ENCODE measurements at regions of chr11 and their contacts with region 1.

Region 1: DNA sequence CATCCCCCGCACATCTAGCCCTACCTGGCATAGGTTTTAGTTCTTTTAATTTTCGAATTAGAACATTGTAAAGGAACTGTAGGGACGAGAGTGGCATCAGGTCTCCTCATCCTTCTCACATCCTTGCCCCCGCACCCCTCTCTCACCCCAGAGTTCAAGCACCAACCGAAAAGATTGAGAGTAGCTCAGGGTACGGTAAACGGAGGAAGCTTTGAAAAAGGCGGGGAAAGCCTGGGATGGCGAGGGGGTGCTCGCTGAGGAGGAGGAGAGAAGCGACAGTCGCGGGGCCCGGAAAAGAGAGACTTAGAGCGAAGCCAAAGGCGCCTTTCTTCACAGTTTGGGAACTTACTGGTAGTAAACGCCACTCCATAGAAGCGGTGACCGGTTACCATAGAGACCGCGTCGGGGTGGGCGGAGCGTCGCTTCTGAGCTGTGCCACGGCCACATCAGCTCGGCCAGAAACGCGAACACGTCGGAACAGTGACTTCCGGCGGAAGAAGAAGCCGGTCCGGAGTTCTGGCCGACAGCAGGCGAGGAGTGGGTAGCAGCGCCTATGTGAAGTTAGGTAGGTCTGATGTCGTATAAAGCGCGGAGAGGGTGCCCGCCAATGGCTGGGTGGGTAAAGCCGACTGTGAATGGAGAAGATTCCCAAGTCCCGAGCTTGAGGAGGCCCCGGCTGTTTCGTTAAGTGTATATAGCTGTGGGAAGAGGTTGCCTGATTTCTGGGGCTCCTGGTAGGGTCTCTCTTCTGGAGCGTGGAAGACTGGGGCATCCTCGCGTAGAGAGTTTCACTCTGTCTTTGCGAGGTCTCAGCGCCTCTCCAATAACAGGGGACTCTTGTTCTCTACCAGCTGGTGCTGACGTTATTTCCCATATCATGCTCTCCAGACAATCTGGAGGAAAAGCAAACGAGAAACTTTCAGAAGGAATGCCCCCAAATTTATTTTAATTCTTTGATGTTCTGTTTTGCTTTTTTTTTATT is at the starts of genes DCDC1 and DNAJC24:
- DNase-seq: peak; percentile 88
- H3K4me3 Mint-ChIP-seq: peak within 1 kb of the TSS; percentile 98
- H3K27ac Mint-ChIP-seq: peak within 1 kb of the TSS; percentile 94
- H3K4me1 Mint-ChIP-seq: peaks cover 31% of the 10 kb centered on the region
- H3K27me3 Mint-ChIP-seq: peaks cover 19% of the 10 kb centered on the region
- total RNA-seq, gene DCDC1: not detected in 2 replicates
- total RNA-seq, gene DNAJC24: 19.6 and 20.7 TPM in 2 replicates

Region 2: GRCh38 chr11:31509429-31510345 is 140.0 kb after region 1 on chr11 and contains the starts of genes ELP4 and IMMP1L:
- intact Hi-C with region 1: loop called (anchors 2 kb)
- DNase-seq: peak; percentile 93
- H3K4me3 Mint-ChIP-seq: peak within 1 kb of the TSS; percentile 91
- H3K27ac Mint-ChIP-seq: peak within 1 kb of the TSS; percentile 84
- H3K4me1 Mint-ChIP-seq: peaks cover 24% of the 10 kb centered on the region
- H3K27me3 Mint-ChIP-seq: no peaks in the 10 kb centered on the region
- total RNA-seq, gene ELP4: 18.6 and 19.1 TPM in 2 replicates
- total RNA-seq, gene IMMP1L: 20.8 and 25.5 TPM in 2 replicates

Measured in activated T-helper 2 cell treated with anti-CD3 and anti-CD28 coated beads, Interferon-gamma antibody, Interleukin-2, Interleukin-4, amounts not matched to agents 10 μg/mL and 5 μg/mL and 100 μg/mL, durations not matched to agents 14 hours and 24 hours and 36 hours (primary cell).